PC-3 (cell line): ENCODE measurements at regions of chr10 and their contacts with region 1.

Region 1: DNA sequence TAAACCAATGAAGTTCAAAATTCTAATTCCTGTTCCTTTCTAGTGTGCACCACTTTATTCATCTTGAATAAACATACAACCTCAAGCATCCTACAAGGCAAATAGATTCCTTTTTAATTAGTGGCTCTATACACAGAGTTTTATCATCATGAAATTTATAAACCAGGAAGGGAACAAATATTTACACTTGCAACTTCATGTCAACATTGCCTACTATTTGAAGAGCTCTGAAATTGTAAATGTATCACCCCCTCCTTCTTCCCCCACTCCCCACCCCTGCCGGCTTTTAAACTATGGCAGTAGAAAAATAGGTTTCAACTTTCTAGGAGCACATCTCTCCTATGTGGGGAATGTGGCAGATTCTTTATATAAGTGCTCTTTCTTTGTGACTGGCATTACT is 49.6 kb downstream of the KAT6B start:
- DNase-seq: peak; percentile 99
- ATAC-seq: peak; percentile 92
- H3K4me3 ChIP-seq: peak overlapping the region; percentile 1; the same call in 1 of the 2 replicates
- H3K27ac ChIP-seq: peak overlapping the region; percentile 67
- H3K4me1 ChIP-seq: peaks cover 56% of the 10 kb centered on the region
- H3K27me3 ChIP-seq: no peaks in the 10 kb centered on the region
- CTCF ChIP-seq: no peak

Region 2: GRCh38 chr10:74662635-74663034 is 213.3 kb before region 1 on chr10:
- CTCF ChIA-PET with region 1: no interaction called
- POLR2A ChIA-PET with region 1: no interaction called
- intact Hi-C with region 1: no loop called
- DNase-seq: no peak
- ATAC-seq: no peak
- H3K4me3 ChIP-seq: no peak overlapping the region
- H3K27ac ChIP-seq: no peak overlapping the region
- H3K4me1 ChIP-seq: no peaks in the 10 kb centered on the region
- H3K27me3 ChIP-seq: no peaks in the 10 kb centered on the region
- CTCF ChIP-seq: no peak

Region 3: DNA sequence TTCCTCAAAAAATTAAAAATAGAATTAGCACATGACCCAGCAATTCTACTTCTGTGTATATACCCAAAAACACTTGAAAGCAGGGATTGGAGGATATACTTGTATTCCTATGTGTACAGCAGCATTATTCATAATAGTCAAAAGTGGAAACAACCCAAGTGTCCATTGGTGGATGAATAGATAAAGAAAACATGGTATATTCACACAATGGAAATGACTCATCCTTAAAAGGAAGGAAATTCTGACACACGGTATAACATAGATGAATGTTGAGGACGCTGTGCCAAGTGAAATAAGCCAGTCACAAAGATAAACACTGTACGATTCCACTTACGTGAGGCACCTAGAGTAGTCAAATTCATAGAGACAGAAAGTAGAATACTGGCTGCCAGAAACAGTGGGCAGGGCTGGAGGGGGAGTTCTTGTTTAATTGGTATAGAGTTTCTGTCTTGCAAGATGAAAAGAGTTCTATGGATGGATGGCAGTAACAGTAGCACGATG is 76.2 kb before region 1 on chr10:
- CTCF ChIA-PET with region 1: no interaction called
- POLR2A ChIA-PET with region 1: no interaction called
- intact Hi-C with region 1: loop called (anchors 1 kb)
- DNase-seq: peak; percentile 100
- ATAC-seq: peak; percentile 97
- H3K4me3 ChIP-seq: peak overlapping the region; percentile 3; the same call in 1 of the 2 replicates
- H3K27ac ChIP-seq: peak overlapping the region; percentile 67
- H3K4me1 ChIP-seq: peaks cover 8% of the 10 kb centered on the region
- H3K27me3 ChIP-seq: no peaks in the 10 kb centered on the region
- CTCF ChIP-seq: no peak

Region 4: GRCh38 chr10:74909670-74910069 is 33.7 kb after region 1 on chr10:
- CTCF ChIA-PET with region 1: interaction called, 4 read pairs
- POLR2A ChIA-PET with region 1: no interaction called
- intact Hi-C with region 1: loop called (anchors 1 kb)
- DNase-seq: peak; percentile 96
- ATAC-seq: peak; percentile 94
- H3K4me3 ChIP-seq: no peak overlapping the region
- H3K27ac ChIP-seq: peak overlapping the region; percentile 6
- H3K4me1 ChIP-seq: peaks cover 19% of the 10 kb centered on the region
- H3K27me3 ChIP-seq: no peaks in the 10 kb centered on the region
- CTCF ChIP-seq: no peak

Region 5: GRCh38 chr10:74967911-74968645 is 92.1 kb after region 1 on chr10:
- CTCF ChIA-PET with region 1: no interaction called
- POLR2A ChIA-PET with region 1: no interaction called
- intact Hi-C with region 1: loop called (anchors 1 kb)
- DNase-seq: peak; percentile 100
- ATAC-seq: peak; percentile 73
- H3K4me3 ChIP-seq: peak overlapping the region; percentile 10
- H3K27ac ChIP-seq: peak overlapping the region; percentile 28
- H3K4me1 ChIP-seq: peaks cover 25% of the 10 kb centered on the region
- H3K27me3 ChIP-seq: no peaks in the 10 kb centered on the region
- CTCF ChIP-seq: no peak; the same call in 1 of the 2 replicates

Region 6: GRCh38 chr10:75099952-75100763 is 224.2 kb after region 1 on chr10:
- CTCF ChIA-PET with region 1: no interaction called
- POLR2A ChIA-PET with region 1: no interaction called
- intact Hi-C with region 1: loop called (anchors 5 kb)
- DNase-seq: peak; percentile 99
- ATAC-seq: peak; percentile 90
- H3K4me3 ChIP-seq: no peak overlapping the region
- H3K27ac ChIP-seq: no peak overlapping the region
- H3K4me1 ChIP-seq: peaks cover 7% of the 10 kb centered on the region; the same call in 1 of the 2 replicates
- H3K27me3 ChIP-seq: no peaks in the 10 kb centered on the region
- CTCF ChIP-seq: peak; percentile 100